HepG2 (cell line): ENCODE measurements at regions of chr9 and their contacts with region 1.

Region 1: GRCh38 chr9:93479726-93480125 is 26.3 kb upstream of the FAM120AOS start:
- DNase-seq: no peak
- ATAC-seq: no peak
- H3K4me3 ChIP-seq: no peak overlapping the region
- H3K27ac ChIP-seq: no peak overlapping the region
- H3K4me1 ChIP-seq: no peaks in the 10 kb centered on the region
- H3K27me3 ChIP-seq: no peaks in the 10 kb centered on the region
- CTCF ChIP-seq: no peak
- EP300 ChIP-seq: no peak
- POLR2A ChIP-seq: no peak
- RAD21 ChIP-seq: no peak

Region 2: DNA sequence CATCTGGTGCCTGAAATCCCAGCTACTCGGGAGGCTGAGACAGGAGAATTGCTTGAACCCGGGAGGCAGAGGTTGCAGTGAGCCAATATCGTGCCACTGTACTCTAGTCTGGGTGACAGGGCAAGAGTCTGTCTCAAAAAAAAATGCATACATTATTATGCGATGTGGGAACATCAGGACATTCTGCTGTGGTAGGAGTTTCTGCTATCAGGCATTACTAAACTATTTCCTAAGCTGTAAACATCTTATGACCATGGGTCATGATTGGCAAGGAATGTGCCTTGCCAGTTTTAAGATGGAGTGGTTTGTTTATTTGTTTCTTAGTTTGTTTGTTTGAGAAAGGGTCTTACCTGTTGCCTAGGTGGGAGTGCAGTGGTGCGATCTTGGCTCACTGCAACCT is 73.4 kb before region 1 on chr9:
- CTCF ChIA-PET with region 1: no interaction called
- POLR2A ChIA-PET with region 1: no interaction called
- in situ Hi-C with region 1: no loop called
- intact Hi-C with region 1: loop called (anchors 5 kb)
- DNase-seq: no peak
- ATAC-seq: no peak
- H3K4me3 ChIP-seq: no peak overlapping the region
- H3K27ac ChIP-seq: no peak overlapping the region
- H3K4me1 ChIP-seq: no peaks in the 10 kb centered on the region
- H3K27me3 ChIP-seq: peaks cover 0 to 3% of the 10 kb centered on the region in 2 experiments; a peak in 2 of 5 replicates
- CTCF ChIP-seq: no peak
- EP300 ChIP-seq: no peak
- POLR2A ChIP-seq: no peak
- RAD21 ChIP-seq: no peak